ENCODE measurements at regions of chr7 and their contacts with region 1.

Region 1: DNA sequence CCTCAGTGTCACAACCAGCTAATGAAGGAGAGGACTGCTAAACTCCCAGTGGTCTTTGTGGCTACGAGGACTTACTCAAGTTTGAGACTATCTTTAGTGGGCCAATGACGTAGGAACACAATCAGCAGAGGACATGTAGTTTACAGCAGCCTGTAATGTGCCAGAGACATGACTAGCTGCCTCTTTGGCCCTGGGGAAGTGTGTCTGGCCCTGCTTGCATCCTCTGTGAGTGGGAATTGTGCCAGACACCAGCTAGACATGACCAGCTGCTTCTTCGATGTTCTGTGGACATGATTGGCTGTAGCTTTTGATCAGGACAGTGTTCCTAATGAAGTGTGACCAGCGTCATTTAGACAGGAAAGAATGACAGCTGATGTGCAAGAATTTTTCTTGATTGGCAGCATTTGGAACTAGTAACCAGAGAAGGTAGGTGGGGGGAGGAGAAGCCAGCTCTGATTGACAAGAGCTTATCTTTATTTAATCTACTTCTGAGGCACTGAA is 141.7 kb downstream of the AUTS2 start:
- DNase-seq: peak; percentile 6
- ATAC-seq: no peak
- H3K4me3 Mint-ChIP-seq: no peak overlapping the region
- H3K27ac Mint-ChIP-seq: peak overlapping the region; percentile 42
- H3K4me1 Mint-ChIP-seq: peaks cover 17% of the 10 kb centered on the region
- H3K27me3 Mint-ChIP-seq: peaks cover 8% of the 10 kb centered on the region

Region 2: GRCh38 chr7:69598081-69598486 is 141.9 kb before region 1 on chr7 and contains the start of gene AUTS2:
- CTCF ChIA-PET with region 1: no interaction called
- POLR2A ChIA-PET with region 1: no interaction called
- intact Hi-C with region 1: loop called (anchors 2 to 5 kb)
- DNase-seq: peak; percentile 78
- ATAC-seq: peak; percentile 76
- H3K4me3 Mint-ChIP-seq: peak within 1 kb of the TSS; percentile 78
- H3K27ac Mint-ChIP-seq: no peak within 1 kb of the TSS
- H3K4me1 Mint-ChIP-seq: peaks cover 10% of the 10 kb centered on the region
- H3K27me3 Mint-ChIP-seq: peaks cover 30% of the 10 kb centered on the region
- total RNA-seq, gene AUTS2: 2.4 to 3.0 TPM

Region 3: GRCh38 chr7:69757981-69758430 is 18.0 kb after region 1 on chr7:
- CTCF ChIA-PET with region 1: no interaction called
- POLR2A ChIA-PET with region 1: no interaction called
- intact Hi-C with region 1: no loop called
- DNase-seq: no peak
- ATAC-seq: no peak
- H3K4me3 Mint-ChIP-seq: no peak overlapping the region
- H3K27ac Mint-ChIP-seq: no peak overlapping the region
- H3K4me1 Mint-ChIP-seq: peaks cover 4% of the 10 kb centered on the region
- H3K27me3 Mint-ChIP-seq: no peaks in the 10 kb centered on the region

Region 4: DNA sequence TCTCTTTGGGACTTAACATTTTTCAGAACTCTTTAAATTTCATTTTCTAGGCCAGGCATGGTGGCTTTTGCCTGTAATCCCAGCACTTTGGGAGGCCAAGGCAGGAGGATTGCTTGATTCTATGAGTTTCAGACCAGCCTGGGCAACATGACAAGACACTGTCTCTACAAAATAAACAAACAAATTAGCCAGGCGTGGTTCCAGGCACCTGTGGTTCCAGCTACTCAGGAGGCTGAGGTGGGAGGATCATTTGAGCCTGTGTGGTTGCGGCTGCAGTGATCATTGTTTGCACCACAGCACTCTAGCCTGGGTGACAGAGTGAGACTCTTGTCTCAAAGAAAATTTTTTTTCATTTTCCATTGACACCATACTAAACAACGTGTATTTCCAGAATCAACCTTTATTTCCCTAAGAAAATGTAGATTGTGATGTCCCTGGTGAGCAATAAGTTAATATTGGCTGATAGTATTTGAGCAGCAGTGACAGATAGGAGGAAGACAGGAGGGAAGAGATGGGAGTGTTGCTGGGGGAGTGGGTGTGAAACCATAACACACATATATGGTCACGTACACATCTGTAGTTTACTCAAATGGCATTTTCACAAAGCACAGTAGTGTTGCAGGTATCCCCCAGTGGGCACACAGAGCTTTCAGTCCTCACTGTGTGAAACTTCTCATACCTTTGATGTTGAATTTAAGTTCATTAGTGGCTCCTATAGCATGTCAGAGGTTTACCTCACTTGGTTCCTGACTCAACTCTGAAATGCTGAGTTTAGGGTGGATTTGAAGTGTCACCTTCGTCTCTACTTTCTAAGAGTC is 63.9 kb after region 1 on chr7:
- CTCF ChIA-PET with region 1: no interaction called
- POLR2A ChIA-PET with region 1: no interaction called
- intact Hi-C with region 1: loop called (anchors 1 to 5 kb)
- DNase-seq: peak; percentile 33
- ATAC-seq: peak; percentile 90
- H3K4me3 Mint-ChIP-seq: no peak overlapping the region
- H3K27ac Mint-ChIP-seq: no peak overlapping the region
- H3K4me1 Mint-ChIP-seq: peaks cover 6% of the 10 kb centered on the region
- H3K27me3 Mint-ChIP-seq: peaks cover 11% of the 10 kb centered on the region

Region 5: DNA sequence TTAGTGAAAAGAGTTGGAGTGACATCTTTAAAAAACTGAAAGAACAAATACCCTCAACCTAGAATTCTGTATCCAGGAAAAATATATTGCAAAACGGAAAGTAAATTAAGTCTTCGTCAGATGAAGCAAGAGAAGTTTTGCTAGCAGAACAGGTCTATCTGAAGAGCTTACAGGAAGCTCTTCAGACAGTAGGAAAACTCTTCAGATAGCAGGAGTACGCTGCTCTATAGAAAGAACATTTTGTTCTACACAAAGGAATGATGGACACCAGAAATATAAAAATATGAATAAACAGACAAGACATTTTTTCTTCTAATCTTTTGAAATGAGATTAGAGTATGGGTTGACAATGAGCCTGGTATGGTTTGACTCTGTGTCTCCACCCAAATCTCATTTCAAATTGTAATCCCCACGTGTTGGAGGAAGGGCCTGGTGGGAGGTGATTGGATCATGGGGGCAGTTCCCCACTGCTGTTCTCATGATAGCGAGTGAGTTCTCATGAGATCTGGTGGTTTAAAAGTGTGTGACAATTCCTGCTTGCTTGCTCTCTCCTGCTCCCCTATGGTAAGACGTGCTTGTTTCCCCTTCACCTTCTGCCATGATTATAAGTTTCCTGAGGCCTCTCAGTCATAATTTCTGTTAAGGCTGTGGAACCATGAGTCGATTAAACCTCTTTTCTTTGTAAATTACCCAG is 425.6 kb after region 1 on chr7:
- CTCF ChIA-PET with region 1: no interaction called
- POLR2A ChIA-PET with region 1: no interaction called
- intact Hi-C with region 1: loop called in 1 of 2 experiments (anchors 10 kb)
- DNase-seq: no peak
- ATAC-seq: no peak
- H3K4me3 Mint-ChIP-seq: no peak overlapping the region
- H3K27ac Mint-ChIP-seq: no peak overlapping the region
- H3K4me1 Mint-ChIP-seq: peaks cover 6% of the 10 kb centered on the region
- H3K27me3 Mint-ChIP-seq: peaks cover 3% of the 10 kb centered on the region

Region 6: DNA sequence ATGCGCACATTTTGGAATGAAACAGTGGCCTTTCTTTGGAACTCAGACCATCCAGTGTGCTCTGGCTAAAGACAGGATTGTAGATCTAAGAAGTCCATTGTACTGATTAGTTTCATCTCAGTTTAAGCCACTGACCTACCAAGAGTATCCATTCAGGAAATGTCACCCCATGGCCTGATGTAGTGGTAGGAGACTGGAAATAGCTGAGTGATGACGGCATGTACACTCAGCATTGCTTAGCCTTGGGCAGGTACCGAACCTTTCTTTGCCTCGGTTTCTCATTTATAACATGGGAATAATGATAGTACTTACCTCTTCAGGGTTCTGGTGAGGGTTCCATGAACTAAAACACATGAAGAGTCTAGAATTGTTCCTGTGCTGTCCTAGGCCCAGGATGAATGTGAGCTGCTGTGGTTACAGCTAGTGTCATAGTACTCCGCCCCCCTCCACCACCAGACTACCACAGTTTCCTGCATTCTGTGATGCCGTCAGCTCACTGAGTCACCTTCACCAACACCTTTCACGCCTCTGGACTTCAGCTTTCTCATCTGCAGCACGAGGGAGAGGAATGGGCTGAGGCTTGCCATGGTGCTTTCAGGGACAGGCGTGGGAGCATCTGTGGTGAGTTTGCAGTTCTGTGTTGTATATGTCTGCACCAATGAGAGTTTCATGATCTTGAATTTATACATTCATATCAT is 908.0 kb after region 1 on chr7:
- CTCF ChIA-PET with region 1: no interaction called
- POLR2A ChIA-PET with region 1: no interaction called
- intact Hi-C with region 1: loop called in 1 of 2 experiments (anchors 1 kb)
- DNase-seq: peak; percentile 91
- ATAC-seq: peak; percentile 94
- H3K4me3 Mint-ChIP-seq: no peak overlapping the region
- H3K27ac Mint-ChIP-seq: no peak overlapping the region
- H3K4me1 Mint-ChIP-seq: peaks cover 22% of the 10 kb centered on the region
- H3K27me3 Mint-ChIP-seq: peaks cover 14% of the 10 kb centered on the region